ENCODE measurements at regions of chr17 and their contacts with region 1.

Region 1: GRCh38 chr17:14300575-14301278 is at the start of gene HS3ST3B1:
- DNase-seq: peak; percentile 81
- ATAC-seq: peak; percentile 84
- H3K4me3 Mint-ChIP-seq: peak within 1 kb of the TSS; percentile 87
- H3K27ac Mint-ChIP-seq: peak within 1 kb of the TSS; percentile 86
- H3K4me1 Mint-ChIP-seq: peaks cover 58% of the 10 kb centered on the region
- H3K27me3 Mint-ChIP-seq: peaks cover 50% of the 10 kb centered on the region
- CTCF ChIP-seq: no peak
- total RNA-seq, gene HS3ST3B1: 3.1 and 3.3 TPM in 2 replicates

Region 2: DNA sequence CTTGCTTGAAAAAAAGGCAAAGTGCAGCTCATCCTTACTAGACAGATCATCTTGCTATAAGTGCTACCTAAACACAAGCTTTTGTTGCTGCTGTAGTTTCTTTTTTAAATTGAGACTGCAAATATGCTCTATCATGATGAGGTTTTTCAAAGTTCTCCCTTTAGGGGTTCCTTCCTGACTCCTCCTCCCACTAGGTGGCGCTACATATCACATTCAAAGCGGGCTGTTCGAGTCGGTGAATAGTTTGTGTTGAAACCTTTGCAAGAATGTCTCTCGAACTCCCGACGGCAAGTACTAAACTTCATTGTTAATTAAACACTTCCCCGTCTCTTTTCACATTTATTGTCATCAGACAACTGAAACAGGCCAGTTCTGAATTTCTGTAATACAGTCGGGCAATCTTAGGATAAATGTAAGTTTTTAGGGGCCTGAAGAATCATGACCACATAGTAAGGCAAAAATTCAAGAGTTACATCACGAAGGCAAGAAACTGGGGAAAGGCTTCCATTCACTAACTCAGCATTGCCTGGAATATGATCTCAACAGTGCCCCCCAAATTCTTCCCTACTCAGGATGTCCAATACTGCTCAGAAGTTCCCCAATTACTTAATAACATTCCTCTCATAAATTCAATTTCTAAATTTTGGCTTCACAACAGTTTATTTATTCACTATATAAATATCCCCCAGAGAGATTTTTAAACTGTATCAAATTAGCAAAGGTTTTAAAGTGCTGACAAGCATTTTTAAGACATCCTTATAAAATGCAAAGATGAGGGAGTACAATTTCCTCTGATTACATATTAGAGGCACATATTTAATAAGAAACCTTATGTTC is 705.7 kb before region 1 on chr17:
- CTCF ChIA-PET with region 1: interaction called, 20 read pairs
- POLR2A ChIA-PET with region 1: no interaction called
- intact Hi-C with region 1: loop called (anchors 1 kb)
- DNase-seq: peak; percentile 20
- ATAC-seq: no peak
- H3K4me3 Mint-ChIP-seq: no peak overlapping the region
- H3K27ac Mint-ChIP-seq: no peak overlapping the region
- H3K4me1 Mint-ChIP-seq: peaks cover 2% of the 10 kb centered on the region
- H3K27me3 Mint-ChIP-seq: peaks cover 32% of the 10 kb centered on the region
- CTCF ChIP-seq: peak; percentile 91

Region 3: DNA sequence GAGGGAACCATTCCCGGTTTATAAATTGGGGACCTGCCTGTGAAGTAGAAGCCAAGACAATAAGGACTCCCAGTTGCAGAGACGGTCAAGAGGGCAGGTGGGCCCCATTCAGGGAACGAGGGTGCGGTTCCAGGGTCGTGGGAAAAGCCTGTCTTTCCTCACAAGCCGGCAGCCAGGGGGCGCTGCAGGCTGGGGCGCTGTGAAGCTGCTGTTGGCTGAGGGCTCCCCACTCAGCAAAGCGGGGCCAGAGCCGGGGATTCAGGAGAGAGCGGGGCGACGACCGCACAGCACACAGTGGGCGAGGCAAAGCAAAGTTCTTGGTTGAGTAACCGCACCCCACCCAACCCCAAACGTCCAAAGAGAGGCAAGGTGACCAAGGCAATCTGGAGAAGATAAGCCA is 88.9 kb before region 1 on chr17:
- CTCF ChIA-PET with region 1: no interaction called
- POLR2A ChIA-PET with region 1: no interaction called
- intact Hi-C with region 1: loop called (anchors 5 kb)
- DNase-seq: peak; percentile 21
- ATAC-seq: no peak
- H3K4me3 Mint-ChIP-seq: no peak overlapping the region
- H3K27ac Mint-ChIP-seq: no peak overlapping the region
- H3K4me1 Mint-ChIP-seq: no peaks in the 10 kb centered on the region
- H3K27me3 Mint-ChIP-seq: no peaks in the 10 kb centered on the region
- CTCF ChIP-seq: no peak

Region 4: DNA sequence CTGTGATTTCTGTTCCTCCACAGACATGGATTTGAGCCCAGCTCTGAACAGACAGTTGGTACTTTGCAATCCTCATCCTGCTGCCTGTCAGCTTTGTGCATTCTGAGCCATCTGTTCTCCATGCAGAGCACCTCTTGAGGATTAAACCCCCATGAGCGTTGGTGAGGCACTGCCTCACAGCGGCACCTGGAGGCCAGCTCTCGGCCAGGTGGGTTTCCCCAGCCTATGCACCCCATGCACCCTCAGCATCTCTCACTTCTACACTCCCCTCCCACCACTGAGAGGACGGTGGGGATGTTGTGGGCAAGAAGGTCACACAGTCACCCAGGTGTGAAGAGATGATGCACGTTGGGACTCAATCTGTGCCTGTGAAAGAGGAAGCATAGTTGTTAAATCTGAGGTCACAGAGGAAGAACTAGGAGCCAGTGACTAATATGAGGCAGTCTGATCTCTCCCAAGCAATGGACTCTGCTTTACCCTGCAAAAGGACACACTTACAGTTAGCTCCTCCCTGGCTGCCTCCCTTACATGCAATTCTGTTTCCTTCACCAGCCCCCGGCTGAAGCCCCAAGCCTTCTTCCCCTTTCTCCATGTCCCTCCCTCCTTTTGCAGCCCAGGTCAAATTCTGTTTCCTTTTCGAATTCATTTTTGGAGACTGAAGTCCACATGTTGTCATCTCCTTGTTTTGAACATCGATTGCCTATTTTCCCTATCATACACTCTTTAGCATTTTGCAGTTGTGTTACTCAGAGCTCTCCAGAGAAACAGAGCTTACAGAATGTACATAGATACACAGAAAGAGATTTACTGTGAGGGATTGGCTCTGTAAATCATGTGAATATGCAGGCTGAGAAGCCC is 58.7 kb after region 1 on chr17:
- CTCF ChIA-PET with region 1: interaction called, 10 read pairs
- POLR2A ChIA-PET with region 1: interaction called, 17 read pairs
- intact Hi-C with region 1: loop called (anchors 1 kb)
- DNase-seq: peak; percentile 61
- ATAC-seq: peak; percentile 98
- H3K4me3 Mint-ChIP-seq: peak overlapping the region; percentile 26
- H3K27ac Mint-ChIP-seq: peak overlapping the region; percentile 8
- H3K4me1 Mint-ChIP-seq: peaks cover 26% of the 10 kb centered on the region
- H3K27me3 Mint-ChIP-seq: no peaks in the 10 kb centered on the region
- CTCF ChIP-seq: no peak

Region 5: GRCh38 chr17:14813649-14814365 is 513.1 kb after region 1 on chr17:
- CTCF ChIA-PET with region 1: no interaction called
- POLR2A ChIA-PET with region 1: no interaction called
- intact Hi-C with region 1: loop called (anchors 5 kb)
- DNase-seq: no peak
- ATAC-seq: no peak
- H3K4me3 Mint-ChIP-seq: no peak overlapping the region
- H3K27ac Mint-ChIP-seq: no peak overlapping the region
- H3K4me1 Mint-ChIP-seq: no peaks in the 10 kb centered on the region
- H3K27me3 Mint-ChIP-seq: peaks cover 9% of the 10 kb centered on the region
- CTCF ChIP-seq: no peak